Esophagus muscularis mucosa (tissue), 4 donors: ENCODE measurements at regions of chr1 and their contacts with region 1.

Region 1: DNA sequence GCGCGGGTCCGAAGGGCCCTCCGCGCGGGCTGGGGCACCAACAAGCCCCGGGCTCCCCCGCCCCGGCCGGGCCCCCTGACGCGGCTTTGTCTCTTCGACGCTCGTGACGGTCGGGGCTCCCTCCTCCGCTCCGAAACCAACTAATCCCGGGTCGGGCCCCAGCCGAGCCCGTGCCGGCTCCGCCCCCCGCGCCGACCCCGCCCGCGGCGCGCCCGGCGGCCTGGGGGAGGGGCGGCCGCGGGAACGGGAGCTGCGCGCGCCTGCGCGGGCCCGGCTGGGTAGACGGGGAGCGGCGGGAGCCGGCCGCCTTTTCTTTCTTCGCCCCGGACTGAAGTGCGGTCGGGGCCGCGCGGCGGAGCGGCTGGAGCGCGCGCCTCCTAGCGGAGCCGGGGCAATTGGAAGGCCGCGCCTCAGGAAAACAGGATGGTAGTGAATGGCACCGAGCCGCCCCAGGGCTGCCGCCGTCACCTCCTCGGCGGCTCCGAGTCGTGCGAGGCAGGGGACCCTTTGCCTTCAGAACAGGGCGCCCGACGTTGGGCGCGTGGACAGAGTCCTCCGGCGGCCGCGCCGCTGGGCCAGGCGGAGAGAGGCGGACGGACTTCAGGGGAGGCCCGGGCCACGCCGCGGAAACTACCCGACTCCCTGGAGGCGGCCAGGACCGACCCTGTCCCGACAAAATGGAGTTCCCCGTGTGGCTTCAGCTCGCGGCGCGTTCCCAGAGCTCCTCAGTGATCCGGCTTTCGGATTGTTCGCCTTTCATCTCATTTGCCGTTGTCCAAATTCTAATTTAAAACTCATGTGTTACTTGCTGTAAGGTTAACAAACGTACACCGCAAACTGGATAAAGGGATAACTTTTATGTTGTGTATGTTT is at the start of gene TP53BP2:
- DNase-seq: peak; percentile 94
- H3K4me3 ChIP-seq: peak within 1 kb of the TSS; percentile 88 to 98 (median 96)
- H3K27ac ChIP-seq: peak within 1 kb of the TSS; percentile 96 to 100 (median 98)
- H3K4me1 ChIP-seq: peaks cover 34 to 51% (median 43%) of the 10 kb centered on the region in 4 donors
- H3K27me3 ChIP-seq: no peaks in the 10 kb centered on the region
- CTCF ChIP-seq: peak; percentile 73 to 77 (median 75)
- EP300 ChIP-seq: no peak
- POLR2A ChIP-seq: peak; percentile 78
- total RNA-seq, gene TP53BP2: 26.6 to 106 (median 43.8) TPM

Region 2: GRCh38 chr1:223700942-223701637 is 145.0 kb before region 1 on chr1:
- intact Hi-C with region 1: loop called (anchors 5 kb)
- DNase-seq: no peak
- H3K4me3 ChIP-seq: peak overlapping the region in 1 of 4 donors; percentile 6
- H3K27ac ChIP-seq: peak overlapping the region; percentile 76 to 88 (median 82)
- H3K4me1 ChIP-seq: peaks cover 19 to 49% (median 42%) of the 10 kb centered on the region in 4 donors
- H3K27me3 ChIP-seq: no peaks in the 10 kb centered on the region
- CTCF ChIP-seq: no peak
- EP300 ChIP-seq: no peak
- POLR2A ChIP-seq: no peak

Region 3: GRCh38 chr1:223771814-223772770 is 74.0 kb before region 1 on chr1:
- intact Hi-C with region 1: loop called (anchors 10 kb)
- DNase-seq: no peak
- H3K4me3 ChIP-seq: peak overlapping the region in 1 of 4 donors; percentile 21
- H3K27ac ChIP-seq: peak overlapping the region; percentile 59 to 76 (median 68)
- H3K4me1 ChIP-seq: peaks cover 33 to 47% (median 34%) of the 10 kb centered on the region in 4 donors
- H3K27me3 ChIP-seq: no peaks in the 10 kb centered on the region
- CTCF ChIP-seq: no peak
- EP300 ChIP-seq: no peak
- POLR2A ChIP-seq: no peak

Region 4: GRCh38 chr1:223811634-223812415 is 34.2 kb before region 1 on chr1:
- intact Hi-C with region 1: loop called (anchors 5 kb)
- DNase-seq: no peak
- H3K4me3 ChIP-seq: no peak overlapping the region
- H3K27ac ChIP-seq: no peak overlapping the region
- H3K4me1 ChIP-seq: peaks cover 3 to 16% (median 15%) of the 10 kb centered on the region in 4 donors
- H3K27me3 ChIP-seq: no peaks in the 10 kb centered on the region
- CTCF ChIP-seq: peak; percentile 47 to 61 (median 55)
- EP300 ChIP-seq: no peak
- POLR2A ChIP-seq: no peak

Region 5: GRCh38 chr1:223878598-223879325 is 32.7 kb after region 1 on chr1:
- intact Hi-C with region 1: no loop called
- DNase-seq: no peak
- H3K4me3 ChIP-seq: no peak overlapping the region
- H3K27ac ChIP-seq: no peak overlapping the region
- H3K4me1 ChIP-seq: no peaks in the 10 kb centered on the region
- H3K27me3 ChIP-seq: no peaks in the 10 kb centered on the region
- CTCF ChIP-seq: no peak
- EP300 ChIP-seq: no peak
- POLR2A ChIP-seq: no peak